ENCODE measurements at regions of chr12 and their contacts with region 1.

Region 1: DNA sequence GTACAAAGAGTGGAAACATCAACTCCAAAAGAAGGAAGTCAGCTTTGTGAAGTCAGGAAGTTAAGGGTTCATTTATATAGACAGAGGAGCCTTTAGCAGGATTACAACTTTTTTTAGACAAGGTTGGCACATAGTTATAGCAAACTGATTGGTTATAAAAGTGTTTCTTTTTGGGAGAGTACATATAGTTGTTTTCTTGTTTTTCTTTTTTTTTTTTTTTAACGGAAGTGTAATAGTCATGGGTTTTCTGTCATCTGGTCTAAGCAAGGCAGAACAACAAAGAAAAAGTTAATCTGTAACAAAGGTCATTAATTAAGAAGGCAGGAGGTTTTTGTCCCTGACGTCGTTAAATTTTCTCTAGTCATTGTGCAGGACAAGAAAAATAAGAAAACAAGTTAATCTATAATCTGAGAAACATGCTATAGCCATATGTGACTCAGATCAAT is 13.0 kb upstream of the MFAP5 start:
- DNase-seq: no peak
- H3K4me3 ChIP-seq: no peak overlapping the region
- H3K4me3 Mint-ChIP-seq: peak overlapping the region in 2 of 8 donors; percentile 3 to 6
- H3K27ac ChIP-seq: no peak overlapping the region
- H3K27ac Mint-ChIP-seq: peak overlapping the region in 5 of 7 donors; percentile 29 to 72 (median 43)
- H3K4me1 ChIP-seq: peaks cover 9% of the 10 kb centered on the region
- H3K4me1 Mint-ChIP-seq: peaks cover 7 to 14% (median 10%) of the 10 kb centered on the region in 4 donors
- H3K27me3 ChIP-seq: no peaks in the 10 kb centered on the region
- H3K27me3 Mint-ChIP-seq: peaks cover 2 to 3% of the 10 kb centered on the region in 2 donors

Region 2: DNA sequence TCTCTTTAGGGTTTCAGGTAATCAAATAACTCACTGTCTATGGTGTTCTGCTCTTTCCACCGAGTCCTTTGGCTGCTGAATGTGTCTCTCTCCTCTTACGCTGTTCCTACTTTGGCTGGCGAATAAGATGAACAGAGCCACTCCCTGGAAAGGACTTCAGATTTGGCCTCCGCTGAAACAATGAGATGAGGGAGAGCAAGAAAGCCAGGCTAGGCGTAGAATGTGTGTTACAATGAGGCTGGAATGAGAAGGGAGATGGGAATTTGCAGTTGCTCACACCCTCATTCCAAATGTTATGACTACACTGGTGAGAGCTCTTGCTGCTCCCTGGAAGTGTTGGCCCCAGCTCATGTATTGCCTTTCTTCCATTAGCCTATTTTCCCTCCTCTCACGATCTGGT is 13.0 kb before region 1 on chr12 and contains the start of gene MFAP5:
- CTCF ChIA-PET with region 1: interaction called, 17 read pairs
- POLR2A ChIA-PET with region 1: interaction called, 3 read pairs
- intact Hi-C with region 1: no loop called
- DNase-seq: no peak
- H3K4me3 ChIP-seq: no peak within 1 kb of the TSS
- H3K4me3 Mint-ChIP-seq: no peak within 1 kb of the TSS
- H3K27ac ChIP-seq: no peak within 1 kb of the TSS
- H3K27ac Mint-ChIP-seq: no peak within 1 kb of the TSS
- H3K4me1 ChIP-seq: no peaks in the 10 kb centered on the region
- H3K4me1 Mint-ChIP-seq: no peaks in the 10 kb centered on the region
- H3K27me3 ChIP-seq: no peaks in the 10 kb centered on the region
- H3K27me3 Mint-ChIP-seq: peaks cover 5% of the 10 kb centered on the region in 2 donors
- total RNA-seq, gene MFAP5: not detected

Region 3: DNA sequence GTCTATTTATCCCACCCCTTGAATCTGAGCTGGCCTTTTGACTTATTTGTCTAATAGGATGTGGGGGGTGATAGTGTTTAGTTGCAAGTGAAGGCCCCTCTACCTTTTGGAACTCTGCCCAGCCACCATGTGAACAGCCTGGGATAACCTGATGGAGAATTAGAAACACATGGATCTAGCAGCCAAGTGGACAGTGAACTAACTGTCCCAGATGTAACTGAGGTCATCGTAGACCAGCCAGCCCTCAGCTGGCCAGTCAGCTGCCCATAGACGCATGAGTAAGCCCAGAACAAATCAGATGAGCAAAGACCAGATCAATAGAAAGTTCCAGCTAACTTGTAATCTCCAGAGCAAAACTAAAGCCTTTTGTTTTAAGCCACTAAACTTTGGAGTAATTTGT is 913.1 kb after region 1 on chr12:
- CTCF ChIA-PET with region 1: no interaction called
- POLR2A ChIA-PET with region 1: no interaction called
- intact Hi-C with region 1: no loop called
- DNase-seq: no peak
- H3K4me3 ChIP-seq: no peak overlapping the region
- H3K4me3 Mint-ChIP-seq: peak overlapping the region in 1 of 8 donors; percentile 12
- H3K27ac ChIP-seq: no peak overlapping the region
- H3K27ac Mint-ChIP-seq: peak overlapping the region in 1 of 7 donors; percentile 55
- H3K4me1 ChIP-seq: no peaks in the 10 kb centered on the region
- H3K4me1 Mint-ChIP-seq: peaks cover 0 to 1% (median 0%) of the 10 kb centered on the region in 4 donors
- H3K27me3 ChIP-seq: no peaks in the 10 kb centered on the region
- H3K27me3 Mint-ChIP-seq: no peaks in the 10 kb centered on the region